Astrocyte of the cerebellum (primary cell): ENCODE measurements at regions of chr16 and their contacts with region 1.

Region 1: DNA sequence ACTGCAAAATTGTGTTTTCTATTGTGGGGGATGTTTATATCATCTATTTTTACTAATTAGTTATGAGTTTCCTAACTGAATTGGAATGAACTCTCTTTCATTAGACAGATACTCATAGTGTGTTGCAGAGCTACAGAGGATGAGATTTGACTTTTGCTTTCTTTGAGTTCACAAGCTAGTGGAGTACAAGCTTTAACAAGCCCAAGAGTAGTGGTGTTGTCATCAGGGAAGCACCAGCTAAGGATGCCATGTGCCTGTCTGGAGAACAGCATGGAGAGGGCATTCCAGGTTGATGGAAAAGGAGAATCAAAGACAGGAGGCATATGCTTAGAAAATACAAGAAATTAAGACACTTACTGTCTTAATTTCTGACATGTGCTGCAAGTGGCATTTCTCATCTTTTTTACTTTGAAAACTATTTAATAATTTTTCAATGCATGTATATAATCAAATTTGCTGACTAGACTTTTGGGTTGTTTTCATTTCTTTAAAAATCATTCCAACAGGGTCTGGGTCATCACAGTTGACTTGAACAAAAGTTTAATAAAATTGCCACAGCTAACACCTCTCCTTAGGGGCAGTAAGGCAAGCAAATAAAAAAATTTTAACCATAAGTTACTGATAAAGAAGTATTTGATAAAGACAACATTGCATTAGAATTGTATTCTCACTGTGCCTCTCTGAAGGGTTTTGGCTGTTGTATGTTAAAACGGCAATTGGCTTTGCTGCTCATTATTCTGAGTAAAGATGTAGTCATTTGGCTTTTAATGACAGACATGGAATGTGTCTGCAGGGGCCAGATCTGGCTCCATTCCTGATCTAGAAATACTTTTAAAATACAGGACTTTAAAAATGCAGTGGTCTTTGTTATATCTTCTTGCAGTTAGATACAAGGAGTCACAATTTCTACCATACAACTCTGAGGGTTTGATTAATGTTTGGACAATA is 323.7 kb upstream of the CDH11 start:
- DNase-seq: no peak
- H3K4me3 ChIP-seq: no peak overlapping the region
- CTCF ChIP-seq: no peak

Region 2: DNA sequence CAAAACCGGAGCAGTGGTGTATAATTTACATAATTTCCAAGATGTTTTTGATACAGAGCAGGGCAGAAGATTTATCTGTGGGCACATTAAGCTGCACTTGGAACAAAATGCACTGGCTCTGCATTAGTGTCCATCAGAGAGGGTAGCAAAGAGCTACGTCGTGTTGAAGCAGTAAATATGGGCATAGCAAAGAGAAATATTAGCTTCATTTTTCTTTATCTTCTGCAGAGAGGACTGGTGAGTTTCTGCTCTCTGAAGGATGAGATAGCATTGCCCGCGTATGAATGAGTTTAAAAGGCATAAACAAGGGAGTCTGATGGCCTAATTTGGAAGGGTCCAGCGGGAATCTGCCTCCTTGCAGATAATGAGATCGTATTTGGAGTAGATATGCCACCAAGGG is 96.0 kb before region 1 on chr16:
- in situ Hi-C with region 1: loop called (anchors 5 kb)
- DNase-seq: no peak
- H3K4me3 ChIP-seq: no peak overlapping the region
- CTCF ChIP-seq: no peak